ENCODE measurements at regions of chr10 and their contacts with region 1.

Region 1: GRCh38 chr10:90288391-90288933 is 569.4 kb downstream of the HTR7 start:
- DNase-seq: peak; percentile 61
- ATAC-seq: peak; percentile 81
- H3K4me3 ChIP-seq: no peak overlapping the region
- H3K27ac ChIP-seq: no peak overlapping the region
- H3K4me1 ChIP-seq: peaks cover 2% of the 10 kb centered on the region; the same call in 1 of the 2 replicates
- H3K27me3 ChIP-seq: no peaks in the 10 kb centered on the region
- CTCF ChIP-seq: peak; percentile 69
- POLR2A ChIP-seq: no peak
- RAD21 ChIP-seq: peak; percentile 73

Region 2: DNA sequence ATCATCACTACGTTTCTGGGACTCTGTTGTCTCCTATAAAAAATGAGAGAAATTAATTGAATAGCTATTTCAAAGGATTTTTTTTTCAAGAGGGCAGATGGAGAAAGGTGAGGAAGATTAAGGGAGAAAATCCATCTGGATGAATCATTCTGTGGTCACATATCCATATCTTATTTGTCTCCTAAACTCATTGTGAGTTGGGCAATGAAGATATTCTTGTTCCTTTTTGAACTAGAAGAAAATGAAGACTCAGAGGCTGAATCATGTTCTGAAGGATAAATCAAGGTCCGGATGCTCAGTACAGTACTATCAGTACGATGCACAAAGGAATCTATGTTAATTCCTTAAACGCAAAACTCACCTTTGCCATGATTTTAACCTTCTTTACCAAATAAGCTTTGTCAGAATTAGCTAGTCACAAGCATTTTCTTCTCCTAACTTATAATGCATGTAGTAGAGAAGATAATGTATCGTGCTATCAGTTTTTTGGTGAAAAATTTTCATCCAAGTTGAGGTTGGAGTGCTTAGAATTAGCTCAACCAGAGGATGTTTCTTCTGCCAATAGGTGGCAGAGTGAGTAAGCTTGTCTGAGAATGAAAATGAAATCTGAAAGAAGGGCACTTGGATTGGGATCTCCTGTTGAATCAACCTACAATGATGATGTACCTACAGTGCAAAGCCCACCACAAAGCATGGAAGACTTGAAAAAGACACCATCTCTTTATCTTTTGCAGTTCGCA is 140.2 kb before region 1 on chr10:
- CTCF ChIA-PET with region 1: no interaction called
- POLR2A ChIA-PET with region 1: no interaction called
- dilution Hi-C with region 1: no loop called
- in situ Hi-C with region 1: no loop called
- intact Hi-C with region 1: loop called (anchors 5 kb)
- DNase-seq: peak; percentile 22
- ATAC-seq: peak; percentile 60; the same call in 1 of the 2 replicates
- H3K4me3 ChIP-seq: no peak overlapping the region
- H3K27ac ChIP-seq: no peak overlapping the region
- H3K4me1 ChIP-seq: no peaks in the 10 kb centered on the region
- H3K27me3 ChIP-seq: no peaks in the 10 kb centered on the region
- CTCF ChIP-seq: peak; percentile 47
- POLR2A ChIP-seq: no peak
- RAD21 ChIP-seq: peak; percentile 49

Region 3: DNA sequence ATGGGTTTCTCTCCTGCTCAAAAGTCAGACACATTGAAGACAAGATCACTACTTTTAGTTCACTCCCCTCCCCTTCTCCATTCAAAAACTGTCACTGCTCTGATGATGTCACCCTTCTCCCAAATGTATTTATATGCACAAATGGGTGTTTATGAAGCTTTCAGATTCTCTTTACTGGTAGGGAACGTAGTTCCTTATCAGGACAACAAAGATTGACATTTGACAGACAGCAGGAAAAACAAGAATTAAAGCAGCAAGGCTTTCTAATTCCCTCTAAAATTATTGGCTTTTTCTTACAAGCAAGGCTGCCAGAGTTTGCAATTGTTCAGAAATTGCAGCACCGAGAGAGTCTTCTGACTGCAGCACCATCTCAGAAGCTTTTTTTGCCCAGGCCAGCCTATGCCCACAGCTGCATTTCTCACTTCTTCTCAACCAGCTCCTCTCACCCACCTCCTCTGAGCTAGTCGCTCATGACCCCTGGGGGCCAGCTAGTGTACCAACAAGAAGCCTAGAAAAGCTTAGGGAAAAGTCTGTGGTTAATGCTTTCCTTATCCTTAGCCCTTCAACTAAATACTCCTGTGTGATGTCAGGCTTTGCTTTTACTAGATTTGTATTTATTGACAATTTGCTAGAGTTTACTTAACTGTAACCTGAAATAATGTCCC is 304.3 kb after region 1 on chr10:
- CTCF ChIA-PET with region 1: interaction called, 16 read pairs
- POLR2A ChIA-PET with region 1: no interaction called
- dilution Hi-C with region 1: no loop called
- in situ Hi-C with region 1: no loop called
- intact Hi-C with region 1: loop called (anchors 1 kb)
- DNase-seq: peak; percentile 51
- ATAC-seq: peak; percentile 93
- H3K4me3 ChIP-seq: no peak overlapping the region
- H3K27ac ChIP-seq: no peak overlapping the region
- H3K4me1 ChIP-seq: no peaks in the 10 kb centered on the region
- H3K27me3 ChIP-seq: peaks cover 10% of the 10 kb centered on the region
- CTCF ChIP-seq: peak; percentile 64
- POLR2A ChIP-seq: no peak
- RAD21 ChIP-seq: peak; percentile 80

Region 4: GRCh38 chr10:90652519-90652918 is 364.1 kb after region 1 on chr10:
- CTCF ChIA-PET with region 1: interaction called, 5 read pairs
- POLR2A ChIA-PET with region 1: no interaction called
- dilution Hi-C with region 1: no loop called
- in situ Hi-C with region 1: no loop called
- intact Hi-C with region 1: loop called (anchors 1 kb)
- DNase-seq: peak; percentile 20
- ATAC-seq: no peak
- H3K4me3 ChIP-seq: no peak overlapping the region
- H3K27ac ChIP-seq: no peak overlapping the region
- H3K4me1 ChIP-seq: no peaks in the 10 kb centered on the region
- H3K27me3 ChIP-seq: no peaks in the 10 kb centered on the region
- CTCF ChIP-seq: peak; percentile 46
- POLR2A ChIP-seq: no peak
- RAD21 ChIP-seq: peak; percentile 51

Region 5: GRCh38 chr10:90787393-90788198 is 499.1 kb after region 1 on chr10:
- CTCF ChIA-PET with region 1: interaction called, 7 read pairs
- POLR2A ChIA-PET with region 1: no interaction called
- dilution Hi-C with region 1: no loop called
- in situ Hi-C with region 1: no loop called
- intact Hi-C with region 1: loop called (anchors 1 kb)
- DNase-seq: peak; percentile 30
- ATAC-seq: peak; percentile 72
- H3K4me3 ChIP-seq: no peak overlapping the region
- H3K27ac ChIP-seq: no peak overlapping the region
- H3K4me1 ChIP-seq: no peaks in the 10 kb centered on the region
- H3K27me3 ChIP-seq: peaks cover 4% of the 10 kb centered on the region
- CTCF ChIP-seq: peak; percentile 71
- POLR2A ChIP-seq: no peak
- RAD21 ChIP-seq: peak; percentile 67

Region 6: GRCh38 chr10:90862908-90863514 is 574.5 kb after region 1 on chr10:
- CTCF ChIA-PET with region 1: interaction called, 3 read pairs
- POLR2A ChIA-PET with region 1: no interaction called
- dilution Hi-C with region 1: no loop called
- in situ Hi-C with region 1: no loop called
- intact Hi-C with region 1: loop called (anchors 1 kb)
- DNase-seq: peak; percentile 47
- ATAC-seq: peak; percentile 30; the same call in 1 of the 2 replicates
- H3K4me3 ChIP-seq: no peak overlapping the region
- H3K27ac ChIP-seq: no peak overlapping the region
- H3K4me1 ChIP-seq: no peaks in the 10 kb centered on the region
- H3K27me3 ChIP-seq: peaks cover 21% of the 10 kb centered on the region
- CTCF ChIP-seq: peak; percentile 89
- POLR2A ChIP-seq: no peak
- RAD21 ChIP-seq: peak; percentile 83